ENCODE measurements at regions of chr12 and their contacts with region 1.

Region 1: DNA sequence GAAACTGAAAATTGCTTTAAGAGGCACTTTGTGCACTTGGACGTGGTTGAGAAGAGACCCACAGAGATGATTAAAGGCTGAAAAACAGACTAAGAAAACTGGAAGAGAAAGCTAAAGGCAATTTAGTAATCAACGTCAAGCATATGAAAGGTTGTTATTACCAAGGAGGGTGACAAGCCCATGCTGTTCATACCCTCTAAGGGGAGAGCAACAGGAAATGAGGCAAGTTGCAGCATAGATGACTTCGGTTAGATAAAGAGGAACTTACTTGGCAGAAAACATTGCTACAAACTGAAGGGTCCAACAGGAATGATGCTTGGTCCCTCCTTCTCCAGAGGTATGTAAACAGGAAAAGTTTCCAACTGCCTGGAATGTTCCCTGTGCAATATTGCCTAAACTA is 107.8 kb downstream of the DUSP6 start:
- DNase-seq: peak; percentile 40
- H3K4me3 Mint-ChIP-seq: peak overlapping the region; percentile 25
- H3K27ac Mint-ChIP-seq: peak overlapping the region; percentile 86
- H3K4me1 Mint-ChIP-seq: peaks cover 39% of the 10 kb centered on the region
- H3K27me3 Mint-ChIP-seq: no peaks in the 10 kb centered on the region

Region 2: DNA sequence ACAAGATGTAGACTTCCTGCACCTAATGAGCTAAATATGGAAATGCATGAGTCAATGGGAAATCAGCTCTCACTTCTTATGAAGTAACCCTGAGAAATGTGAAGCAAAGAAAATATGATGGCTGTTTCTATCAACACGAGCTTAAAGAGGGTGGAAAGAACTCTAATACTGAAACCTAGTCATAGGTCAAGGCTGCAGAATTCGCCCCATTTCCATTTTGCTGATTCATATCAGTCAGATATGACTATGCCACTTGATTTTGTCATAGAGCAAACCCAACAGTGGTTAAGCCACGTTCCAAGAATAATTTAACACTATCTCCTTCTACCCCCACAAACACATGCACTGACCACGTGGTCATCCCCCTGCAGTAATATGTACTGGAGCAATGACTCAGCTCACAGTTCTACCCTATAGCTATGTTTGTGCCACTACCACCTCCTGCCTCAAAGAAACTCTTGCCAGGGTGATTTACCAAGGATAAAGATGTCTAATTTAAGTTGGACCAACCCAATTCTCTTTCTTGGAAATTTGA is 944.9 kb before region 1 on chr12:
- CTCF ChIA-PET with region 1: no interaction called
- POLR2A ChIA-PET with region 1: no interaction called
- intact Hi-C with region 1: loop called (anchors 2 kb)
- DNase-seq: peak; percentile 75
- H3K4me3 Mint-ChIP-seq: no peak overlapping the region
- H3K27ac Mint-ChIP-seq: peak overlapping the region; percentile 72
- H3K4me1 Mint-ChIP-seq: peaks cover 27% of the 10 kb centered on the region
- H3K27me3 Mint-ChIP-seq: no peaks in the 10 kb centered on the region

Region 3: DNA sequence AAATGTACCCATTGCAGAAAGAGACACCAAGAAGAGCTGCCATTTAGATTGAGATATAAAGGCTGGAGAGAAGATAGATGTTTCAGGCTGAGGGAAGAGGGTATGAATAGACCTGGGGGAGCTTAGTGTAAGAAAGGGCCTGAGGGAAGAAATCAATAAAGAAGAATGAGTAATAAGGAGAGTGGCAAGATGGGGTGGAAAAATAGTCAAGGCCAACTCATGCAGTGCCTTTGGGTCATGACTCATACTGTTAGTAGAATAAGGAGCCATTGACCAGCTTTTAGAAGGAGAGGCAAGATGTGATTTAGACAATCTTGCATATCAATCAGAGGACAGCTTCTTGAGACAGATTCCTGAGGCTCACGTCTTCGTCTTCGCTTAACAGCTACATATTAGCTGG is 179.8 kb before region 1 on chr12:
- CTCF ChIA-PET with region 1: no interaction called
- POLR2A ChIA-PET with region 1: interaction called, 4 read pairs
- intact Hi-C with region 1: loop called (anchors 1 kb)
- DNase-seq: peak; percentile 23
- H3K4me3 Mint-ChIP-seq: no peak overlapping the region
- H3K27ac Mint-ChIP-seq: no peak overlapping the region
- H3K4me1 Mint-ChIP-seq: peaks cover 35% of the 10 kb centered on the region
- H3K27me3 Mint-ChIP-seq: no peaks in the 10 kb centered on the region

Region 4: DNA sequence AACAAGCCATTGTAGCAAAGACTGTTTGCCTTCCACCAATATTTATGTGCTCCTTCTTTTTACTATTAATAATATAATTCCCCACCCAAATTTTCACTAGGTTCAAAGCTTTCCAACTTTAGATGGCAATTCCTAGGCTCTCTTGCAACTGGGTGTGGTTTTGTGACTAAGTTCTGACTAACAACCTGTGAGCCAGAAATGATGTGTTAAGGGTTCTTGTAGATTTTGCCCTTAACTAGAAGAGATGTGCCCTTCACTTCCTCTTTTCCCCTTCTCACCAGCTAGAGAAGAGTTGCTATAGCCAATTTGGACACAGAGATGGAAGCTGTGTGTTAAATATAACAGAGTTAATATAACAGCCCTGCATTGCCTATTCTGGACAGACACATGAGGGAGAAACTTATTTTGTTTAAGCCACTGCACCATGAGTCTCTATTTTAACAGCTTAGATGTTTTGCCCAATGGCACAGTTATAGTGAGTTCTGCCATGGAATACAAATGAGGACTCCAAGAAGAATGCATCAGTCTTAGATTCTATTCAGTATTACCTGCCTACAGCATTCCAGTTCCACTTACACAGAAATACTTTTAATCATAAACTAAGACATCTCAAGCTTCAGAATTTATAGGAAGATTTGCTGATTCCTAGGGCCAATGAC is 108.4 kb before region 1 on chr12:
- CTCF ChIA-PET with region 1: interaction called, 12 read pairs
- POLR2A ChIA-PET with region 1: interaction called, 3 read pairs
- intact Hi-C with region 1: loop called (anchors 1 kb)
- DNase-seq: no peak
- H3K4me3 Mint-ChIP-seq: no peak overlapping the region
- H3K27ac Mint-ChIP-seq: no peak overlapping the region
- H3K4me1 Mint-ChIP-seq: peaks cover 31% of the 10 kb centered on the region
- H3K27me3 Mint-ChIP-seq: no peaks in the 10 kb centered on the region

Region 5: GRCh38 chr12:89179983-89180382 is 64.6 kb before region 1 on chr12:
- CTCF ChIA-PET with region 1: interaction called, 3 read pairs
- POLR2A ChIA-PET with region 1: interaction called, 18 read pairs
- intact Hi-C with region 1: loop called (anchors 1 kb)
- DNase-seq: no peak
- H3K4me3 Mint-ChIP-seq: no peak overlapping the region
- H3K27ac Mint-ChIP-seq: peak overlapping the region; percentile 74
- H3K4me1 Mint-ChIP-seq: peaks cover 35% of the 10 kb centered on the region
- H3K27me3 Mint-ChIP-seq: no peaks in the 10 kb centered on the region

Region 6: GRCh38 chr12:89280833-89281538 is 36.5 kb after region 1 on chr12:
- CTCF ChIA-PET with region 1: no interaction called
- POLR2A ChIA-PET with region 1: no interaction called
- intact Hi-C with region 1: loop called (anchors 2 kb)
- DNase-seq: no peak
- H3K4me3 Mint-ChIP-seq: peak overlapping the region; percentile 30
- H3K27ac Mint-ChIP-seq: peak overlapping the region; percentile 75
- H3K4me1 Mint-ChIP-seq: peaks cover 23% of the 10 kb centered on the region
- H3K27me3 Mint-ChIP-seq: no peaks in the 10 kb centered on the region

Region 7: DNA sequence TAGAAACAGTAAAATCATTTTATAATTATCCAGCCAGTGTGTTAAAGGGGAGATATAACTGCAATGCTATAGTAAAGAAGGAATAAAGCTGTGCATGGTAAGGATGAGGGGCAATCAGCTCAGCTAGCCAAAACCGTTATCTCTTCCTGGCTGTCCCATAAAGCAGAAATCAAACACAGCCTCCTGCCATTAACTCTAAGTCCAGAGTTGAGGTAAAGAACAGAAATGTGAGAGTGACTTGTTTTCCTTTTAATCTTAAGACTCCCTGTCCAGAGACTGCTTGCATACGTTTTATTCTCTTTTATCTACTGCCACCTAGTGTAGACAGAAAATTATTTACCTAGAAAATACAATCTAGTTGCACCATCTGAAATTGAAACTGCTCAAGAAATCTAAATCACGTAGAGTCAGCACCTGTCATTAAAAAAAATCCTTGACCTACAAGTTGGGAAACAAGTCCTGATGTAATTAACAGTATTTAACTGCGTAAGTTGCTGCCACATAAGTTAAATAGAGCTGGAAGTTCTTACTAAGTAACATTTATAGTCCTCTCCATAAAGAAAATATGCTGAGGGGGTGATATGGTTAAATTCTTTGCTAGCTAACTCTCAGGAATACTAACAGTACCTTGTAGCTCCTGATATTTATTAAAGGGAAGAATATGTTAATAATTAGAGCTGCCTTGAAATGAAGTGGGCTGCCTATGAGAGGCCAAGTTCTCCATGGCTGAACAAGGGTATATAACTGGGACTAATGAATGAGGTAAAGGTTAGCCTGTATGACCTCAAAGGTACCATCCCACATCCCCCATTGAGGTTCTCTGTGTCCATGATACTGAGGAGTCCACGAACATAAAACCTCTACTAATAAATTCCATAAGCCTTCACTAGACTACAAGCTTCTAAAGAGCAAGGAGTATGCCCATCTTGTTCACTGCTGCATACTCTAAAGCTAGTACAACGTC is 217.4 kb after region 1 on chr12:
- CTCF ChIA-PET with region 1: interaction called, 3 read pairs
- POLR2A ChIA-PET with region 1: no interaction called
- intact Hi-C with region 1: loop called (anchors 5 kb)
- DNase-seq: no peak
- H3K4me3 Mint-ChIP-seq: peak overlapping the region; percentile 35
- H3K27ac Mint-ChIP-seq: peak overlapping the region; percentile 60
- H3K4me1 Mint-ChIP-seq: peaks cover 13% of the 10 kb centered on the region
- H3K27me3 Mint-ChIP-seq: no peaks in the 10 kb centered on the region

Region 8: GRCh38 chr12:89494411-89495231 is 250.1 kb after region 1 on chr12:
- CTCF ChIA-PET with region 1: no interaction called
- POLR2A ChIA-PET with region 1: no interaction called
- intact Hi-C with region 1: no loop called
- DNase-seq: peak; percentile 71
- H3K4me3 Mint-ChIP-seq: peak overlapping the region; percentile 36
- H3K27ac Mint-ChIP-seq: peak overlapping the region; percentile 99
- H3K4me1 Mint-ChIP-seq: peaks cover 30% of the 10 kb centered on the region
- H3K27me3 Mint-ChIP-seq: no peaks in the 10 kb centered on the region